Posterior vena cava (tissue), 2 donors: ENCODE measurements at regions of chr5 and their contacts with region 1.

Region 1: GRCh38 chr5:167684251-167684650 is 607.2 kb upstream of the WWC1 start:
- DNase-seq: no peak

Region 2: GRCh38 chr5:167012123-167013034 is 671.9 kb before region 1 on chr5:
- intact Hi-C with region 1: no loop called
- DNase-seq: no peak

Region 3: GRCh38 chr5:167658889-167659288 is 25.4 kb before region 1 on chr5:
- intact Hi-C with region 1: loop called in 1 of 2 experiments (anchors 1 kb)
- DNase-seq: no peak